Activated CD4-positive, alpha-beta memory T cell treated with anti-CD3 and anti-CD28 coated beads for 36 hours (primary cell): ENCODE measurements at regions of chr6 and their contacts with region 1.

Region 1: DNA sequence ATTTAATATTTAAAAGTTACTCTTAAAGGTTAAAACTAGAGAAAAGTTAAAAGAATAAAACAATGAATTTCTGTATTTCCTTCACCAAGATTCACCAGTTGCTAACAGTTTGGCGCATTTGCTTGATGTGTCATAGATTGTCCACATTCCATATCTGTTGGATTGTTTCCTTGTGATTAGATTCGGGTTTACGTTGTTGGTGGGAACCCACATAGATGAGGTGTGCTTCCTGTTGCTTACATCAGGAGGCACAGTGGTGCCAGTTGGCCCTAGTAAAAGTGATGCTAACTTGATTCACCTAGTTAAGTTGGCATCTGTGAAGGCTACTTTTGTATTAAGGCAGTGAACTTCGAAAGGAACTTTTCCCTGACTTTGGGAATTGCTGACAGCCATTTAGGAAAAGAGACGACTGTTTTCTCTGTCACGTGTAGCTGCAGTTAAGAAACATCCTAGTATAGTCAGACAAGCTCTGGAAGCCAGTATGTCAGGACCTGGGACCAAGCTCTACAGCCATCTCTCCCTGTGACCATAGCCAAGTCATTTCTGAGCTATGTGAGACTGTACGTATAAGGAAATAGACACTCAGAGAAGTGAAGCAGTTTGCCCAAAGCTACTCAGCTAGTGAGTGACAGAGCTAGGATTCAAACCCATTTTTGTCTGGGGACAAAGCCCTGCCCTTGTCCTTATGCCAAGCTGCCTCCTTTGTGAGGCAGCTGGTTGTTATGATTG is 49.0 kb downstream of the PPARD start:
- DNase-seq: peak; percentile 28
- H3K4me3 Mint-ChIP-seq: no peak overlapping the region
- H3K27ac Mint-ChIP-seq: peak overlapping the region; percentile 55
- H3K4me1 Mint-ChIP-seq: peaks cover 51% of the 10 kb centered on the region
- H3K27me3 Mint-ChIP-seq: no peaks in the 10 kb centered on the region

Region 2: DNA sequence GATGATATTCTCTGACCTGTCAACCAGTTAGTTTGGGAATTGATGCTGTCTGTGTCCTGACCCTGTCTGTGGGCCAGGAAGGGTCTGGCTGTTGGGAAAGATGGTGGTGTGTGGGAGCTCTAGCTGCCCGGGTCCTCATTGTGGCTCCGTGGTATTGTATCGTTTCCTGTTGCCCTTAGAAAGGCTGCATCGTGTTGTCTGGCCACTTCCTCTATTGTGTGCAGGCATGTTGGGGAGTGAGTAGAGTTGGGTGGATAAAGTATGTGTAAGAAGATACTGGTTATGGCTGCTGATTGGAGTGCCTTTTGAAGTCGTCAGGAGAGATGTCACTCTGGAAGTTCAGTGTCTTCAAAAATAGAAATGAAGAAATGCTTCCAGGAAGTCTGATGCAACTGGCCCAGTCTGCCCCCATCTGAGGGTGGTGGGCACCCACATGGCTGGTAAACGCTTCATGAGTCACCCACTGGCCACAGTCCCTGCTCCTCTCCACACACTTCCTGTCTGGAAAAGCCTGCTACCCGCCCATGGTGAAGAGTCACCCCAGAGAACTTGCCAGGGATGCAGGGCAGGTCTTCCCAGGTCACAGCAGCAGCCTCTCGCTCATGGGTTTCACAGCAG is 21.2 kb before region 1 on chr6:
- CTCF ChIA-PET with region 1: no interaction called
- POLR2A ChIA-PET with region 1: no interaction called
- intact Hi-C with region 1: loop called (anchors 2 kb)
- DNase-seq: peak; percentile 73
- H3K4me3 Mint-ChIP-seq: peak overlapping the region; percentile 27
- H3K27ac Mint-ChIP-seq: peak overlapping the region; percentile 91
- H3K4me1 Mint-ChIP-seq: peaks cover 59% of the 10 kb centered on the region
- H3K27me3 Mint-ChIP-seq: no peaks in the 10 kb centered on the region

Region 3: GRCh38 chr6:35415065-35415991 is 23.9 kb after region 1 on chr6:
- CTCF ChIA-PET with region 1: interaction called, 3 read pairs
- POLR2A ChIA-PET with region 1: no interaction called
- intact Hi-C with region 1: loop called (anchors 2 kb)
- DNase-seq: peak; percentile 53
- H3K4me3 Mint-ChIP-seq: no peak overlapping the region
- H3K27ac Mint-ChIP-seq: peak overlapping the region; percentile 59
- H3K4me1 Mint-ChIP-seq: peaks cover 39% of the 10 kb centered on the region
- H3K27me3 Mint-ChIP-seq: no peaks in the 10 kb centered on the region